ENCODE measurements at regions of chr16 and their contacts with region 1.

Region 1: GRCh38 chr16:8621572-8622314 is at the start of gene METTL22:
- DNase-seq: peak; percentile 93
- H3K4me3 Mint-ChIP-seq: peak within 1 kb of the TSS; percentile 93
- H3K27ac Mint-ChIP-seq: peak within 1 kb of the TSS; percentile 51
- H3K4me1 Mint-ChIP-seq: peaks cover 29% of the 10 kb centered on the region
- H3K27me3 Mint-ChIP-seq: no peaks in the 10 kb centered on the region
- total RNA-seq, gene METTL22: 26.4 to 30.8 TPM

Region 2: GRCh38 chr16:8512941-8513624 is 108.7 kb before region 1 on chr16:
- CTCF ChIA-PET with region 1: no interaction called
- POLR2A ChIA-PET with region 1: no interaction called
- intact Hi-C with region 1: no loop called
- DNase-seq: no peak
- H3K4me3 Mint-ChIP-seq: no peak overlapping the region
- H3K27ac Mint-ChIP-seq: no peak overlapping the region
- H3K4me1 Mint-ChIP-seq: no peaks in the 10 kb centered on the region
- H3K27me3 Mint-ChIP-seq: no peaks in the 10 kb centered on the region

Region 3: DNA sequence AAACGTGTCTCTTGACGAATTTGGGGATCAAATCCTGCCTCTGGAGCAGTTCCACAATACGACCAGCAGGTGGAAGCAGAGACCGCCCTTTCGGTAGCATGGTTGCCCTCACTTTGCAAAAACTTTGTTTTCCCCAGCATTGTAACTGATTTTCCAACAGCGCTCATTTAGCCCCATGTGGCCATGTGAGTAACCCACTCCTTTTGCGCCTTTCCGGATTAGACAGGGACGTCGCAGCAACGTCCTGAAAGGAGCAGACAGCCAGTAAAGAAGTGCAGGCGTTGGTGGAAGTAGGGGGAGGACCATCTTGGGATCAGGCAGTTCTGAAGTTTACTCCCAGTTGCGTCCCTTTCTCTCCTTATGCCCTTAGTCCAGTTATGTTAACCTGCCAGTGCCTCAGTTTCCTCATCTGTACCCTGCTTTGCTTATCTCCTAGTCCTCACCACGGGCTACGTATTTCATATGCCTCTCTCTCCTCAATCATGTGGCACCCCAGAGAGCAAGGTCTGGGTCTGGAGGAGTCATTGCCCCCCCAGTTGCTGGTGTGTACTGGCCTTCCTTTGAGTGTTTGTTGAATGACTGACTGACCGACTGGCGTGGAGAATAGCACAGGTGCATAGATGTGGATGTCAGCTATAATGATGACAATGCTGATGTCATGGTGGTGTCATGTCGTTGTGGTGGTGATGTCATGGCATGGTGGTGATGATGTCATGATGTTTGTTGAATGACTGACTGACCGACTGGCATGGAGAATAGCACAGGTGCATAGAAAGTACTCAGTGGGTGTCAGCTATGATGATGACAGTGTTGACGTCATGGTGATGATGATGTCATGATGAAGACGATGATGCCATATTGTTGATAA is 53.8 kb before region 1 on chr16:
- CTCF ChIA-PET with region 1: interaction called, 4 read pairs
- POLR2A ChIA-PET with region 1: no interaction called
- intact Hi-C with region 1: loop called (anchors 1 kb)
- DNase-seq: peak; percentile 86
- H3K4me3 Mint-ChIP-seq: no peak overlapping the region
- H3K27ac Mint-ChIP-seq: no peak overlapping the region
- H3K4me1 Mint-ChIP-seq: peaks cover 5% of the 10 kb centered on the region
- H3K27me3 Mint-ChIP-seq: peaks cover 8% of the 10 kb centered on the region

Region 4: GRCh38 chr16:8634991-8635736 is 13.4 kb after region 1 on chr16:
- CTCF ChIA-PET with region 1: no interaction called
- POLR2A ChIA-PET with region 1: no interaction called
- intact Hi-C with region 1: no loop called
- DNase-seq: no peak
- H3K4me3 Mint-ChIP-seq: no peak overlapping the region
- H3K27ac Mint-ChIP-seq: no peak overlapping the region
- H3K4me1 Mint-ChIP-seq: no peaks in the 10 kb centered on the region
- H3K27me3 Mint-ChIP-seq: no peaks in the 10 kb centered on the region

Region 5: GRCh38 chr16:8655184-8655717 is 33.5 kb after region 1 on chr16:
- CTCF ChIA-PET with region 1: interaction called, 5 read pairs
- POLR2A ChIA-PET with region 1: interaction called, 3 read pairs
- intact Hi-C with region 1: loop called (anchors 2 kb)
- DNase-seq: peak; percentile 81
- H3K4me3 Mint-ChIP-seq: no peak overlapping the region
- H3K27ac Mint-ChIP-seq: peak overlapping the region; percentile 64
- H3K4me1 Mint-ChIP-seq: peaks cover 18% of the 10 kb centered on the region
- H3K27me3 Mint-ChIP-seq: no peaks in the 10 kb centered on the region

Region 6: DNA sequence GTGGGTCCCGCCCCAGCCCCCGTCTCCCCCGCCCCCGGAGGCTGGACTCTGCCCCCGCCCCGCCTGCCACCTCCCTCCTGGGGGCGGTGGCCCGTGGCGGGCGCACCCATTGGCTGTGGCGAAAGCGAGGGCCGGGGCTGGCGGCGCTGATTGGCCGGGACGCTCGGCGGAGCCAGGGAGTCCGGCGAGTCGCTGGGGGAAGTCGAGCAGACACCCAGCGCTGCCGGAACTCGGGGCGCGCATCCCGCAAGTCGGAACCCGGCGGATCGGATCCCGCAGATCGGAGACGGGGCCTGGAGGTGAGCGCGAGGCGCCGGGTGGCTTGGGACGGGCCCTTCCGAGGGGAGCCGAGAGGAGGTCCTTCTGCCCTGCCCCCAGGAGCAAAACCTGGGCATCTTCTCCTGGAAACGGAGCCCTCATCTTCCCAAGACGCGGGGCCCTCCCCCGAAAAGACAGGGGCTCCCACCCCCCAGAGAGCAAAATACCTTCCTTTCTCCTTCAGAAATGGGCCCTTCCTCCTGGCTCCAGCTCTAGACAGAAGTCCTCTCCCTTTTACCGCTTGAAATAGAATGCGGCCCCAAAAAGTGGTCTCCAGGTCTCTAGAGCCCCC is 52.8 kb after region 1 on chr16 and contains the start of gene ABAT:
- CTCF ChIA-PET with region 1: no interaction called
- POLR2A ChIA-PET with region 1: no interaction called
- intact Hi-C with region 1: loop called (anchors 5 kb)
- DNase-seq: peak; percentile 93
- H3K4me3 Mint-ChIP-seq: peak within 1 kb of the TSS; percentile 79
- H3K27ac Mint-ChIP-seq: peak within 1 kb of the TSS; percentile 68
- H3K4me1 Mint-ChIP-seq: peaks cover 18% of the 10 kb centered on the region
- H3K27me3 Mint-ChIP-seq: no peaks in the 10 kb centered on the region
- total RNA-seq, gene ABAT: 8.7 to 10.0 TPM